Breast epithelium (tissue), 4 donors: ENCODE measurements at regions of chr17 and their contacts with region 1.

Region 1: GRCh38 chr17:29180034-29180787 is at the start of gene MYO18A:
- DNase-seq: peak; percentile 56 to 74
- H3K4me3 ChIP-seq: peak within 1 kb of the TSS; percentile 57 to 85 (median 71)
- H3K27ac ChIP-seq: peak within 1 kb of the TSS; percentile 88 to 94
- H3K4me1 ChIP-seq: peaks cover 15 to 25% of the 10 kb centered on the region in 2 donors
- H3K27me3 ChIP-seq: no peaks in the 10 kb centered on the region
- CTCF ChIP-seq: peak; percentile 64 to 97 (median 80)
- POLR2A ChIP-seq: no peak
- total RNA-seq, gene MYO18A: 31.5 to 71.1 (median 42.3) TPM

Region 2: DNA sequence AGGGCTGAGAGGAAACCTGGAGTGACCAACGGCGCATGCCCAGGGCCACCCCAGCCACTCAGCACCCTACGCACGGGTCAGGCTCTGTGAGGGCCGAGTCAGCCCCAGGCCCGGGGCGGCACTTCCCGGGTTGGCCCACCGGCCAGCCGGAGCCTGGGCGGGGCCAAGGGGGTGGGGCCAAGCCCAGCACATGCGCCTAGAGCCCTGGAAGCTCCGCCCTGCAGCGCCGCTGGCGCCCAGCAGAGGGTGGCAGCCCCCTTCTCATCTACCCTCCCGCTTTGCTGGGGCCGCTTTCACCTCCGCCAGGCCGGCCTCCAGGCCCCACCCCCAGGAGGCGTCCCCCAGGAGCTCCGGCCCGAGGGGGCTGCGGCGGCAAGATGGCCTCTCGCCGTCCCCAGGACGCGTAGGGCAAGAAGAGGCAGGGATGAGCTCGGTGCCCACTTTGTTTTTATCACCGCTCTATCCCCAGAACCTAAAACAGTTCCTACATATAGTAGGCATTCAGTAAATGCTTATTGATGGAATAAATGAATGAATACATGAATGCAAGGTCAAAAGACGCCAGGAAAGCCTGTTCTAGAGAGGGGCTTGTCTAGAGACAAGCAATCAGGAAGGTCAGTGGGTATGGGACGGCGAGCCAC is 31.3 kb before region 1 on chr17:
- intact Hi-C with region 1: loop called (anchors 5 kb)
- DNase-seq: peak; percentile 89 to 92
- H3K4me3 ChIP-seq: peak overlapping the region; percentile 46 to 68 (median 52)
- H3K27ac ChIP-seq: peak overlapping the region; percentile 82 to 85
- H3K4me1 ChIP-seq: peaks cover 11 to 36% of the 10 kb centered on the region in 2 donors
- H3K27me3 ChIP-seq: no peaks in the 10 kb centered on the region
- CTCF ChIP-seq: peak; percentile 78 to 94 (median 90)
- POLR2A ChIP-seq: no peak